ENCODE measurements at regions of chr20 and their contacts with region 1.

Region 1: GRCh38 chr20:51639206-51639832 is 96.8 kb upstream of the NFATC2 start:
- DNase-seq: peak; percentile 69
- H3K4me3 ChIP-seq: no peak overlapping the region
- H3K27ac ChIP-seq: no peak overlapping the region
- H3K4me1 ChIP-seq: no peaks in the 10 kb centered on the region
- H3K27me3 ChIP-seq: no peaks in the 10 kb centered on the region
- CTCF ChIP-seq: peak; percentile 66 to 86 (median 74)
- POLR2A ChIP-seq: no peak

Region 2: DNA sequence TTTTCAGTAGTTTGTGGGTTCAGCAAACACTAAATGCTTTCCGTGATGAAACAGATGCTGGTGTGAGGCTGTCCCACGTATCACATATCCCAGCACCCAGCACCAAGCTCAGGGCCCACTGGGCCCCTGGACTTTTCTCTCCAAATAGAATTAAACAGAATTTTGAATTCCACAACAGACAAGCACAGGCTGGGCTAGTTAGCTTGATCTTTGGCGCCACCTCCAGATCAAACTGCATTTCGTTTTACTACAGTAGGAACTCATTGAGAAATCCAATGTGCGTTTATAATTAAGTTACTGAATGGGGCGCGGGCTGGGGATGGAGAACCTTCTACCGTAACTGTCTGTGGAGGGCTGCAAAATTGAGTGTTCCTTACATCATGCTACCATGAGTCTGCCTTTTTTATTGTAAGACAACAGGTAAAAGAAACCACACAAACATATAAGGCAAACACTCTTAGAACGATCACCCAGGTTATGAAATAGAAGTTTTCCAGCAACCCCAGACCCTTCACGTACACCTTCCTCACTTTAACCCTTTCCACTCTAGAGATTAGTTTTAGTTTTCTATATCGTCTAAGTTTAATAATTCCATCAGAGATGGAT is 444.4 kb after region 1 on chr20:
- intact Hi-C with region 1: loop called (anchors 5 kb)
- DNase-seq: peak; percentile 43
- H3K4me3 ChIP-seq: no peak overlapping the region
- H3K27ac ChIP-seq: no peak overlapping the region
- H3K4me1 ChIP-seq: no peaks in the 10 kb centered on the region
- H3K27me3 ChIP-seq: no peaks in the 10 kb centered on the region
- CTCF ChIP-seq: peak in 3 of 4 experiments; percentile 41 to 64 (median 49)
- POLR2A ChIP-seq: no peak

Region 3: GRCh38 chr20:52150440-52151258 is 511.3 kb after region 1 on chr20:
- intact Hi-C with region 1: loop called (anchors 10 kb)
- DNase-seq: peak; percentile 10
- H3K4me3 ChIP-seq: no peak overlapping the region
- H3K27ac ChIP-seq: no peak overlapping the region
- H3K4me1 ChIP-seq: no peaks in the 10 kb centered on the region
- H3K27me3 ChIP-seq: no peaks in the 10 kb centered on the region
- CTCF ChIP-seq: peak; percentile 38 to 63 (median 56)
- POLR2A ChIP-seq: no peak

Measured in prostate gland (tissue), 2 donors.